ENCODE measurements at regions of chr12 and their contacts with region 1.

Region 1: DNA sequence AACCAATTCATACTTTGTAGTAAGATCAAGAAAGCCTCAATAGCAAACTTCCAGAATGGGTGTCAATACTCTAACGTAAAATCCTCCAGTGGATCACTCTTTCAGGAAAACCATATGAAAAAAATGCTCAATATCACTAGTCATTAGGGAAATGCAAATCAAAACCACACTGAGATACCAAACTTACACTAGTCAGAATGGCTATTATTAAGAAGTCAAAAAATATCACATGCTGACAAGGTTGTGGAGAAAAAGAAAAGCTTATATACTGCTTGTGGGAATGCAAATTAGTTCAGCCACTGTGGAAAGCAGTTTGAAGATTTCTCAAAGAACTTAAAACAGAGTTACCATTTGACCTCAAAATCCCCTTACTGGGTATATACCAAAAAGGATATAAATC is 49.5 kb upstream of the ATXN7L3B start:
- DNase-seq: no peak
- H3K4me3 Mint-ChIP-seq: no peak overlapping the region
- H3K27ac Mint-ChIP-seq: no peak overlapping the region
- H3K4me1 Mint-ChIP-seq: peaks cover 15% of the 10 kb centered on the region
- H3K27me3 Mint-ChIP-seq: peaks cover 1% of the 10 kb centered on the region

Region 2: DNA sequence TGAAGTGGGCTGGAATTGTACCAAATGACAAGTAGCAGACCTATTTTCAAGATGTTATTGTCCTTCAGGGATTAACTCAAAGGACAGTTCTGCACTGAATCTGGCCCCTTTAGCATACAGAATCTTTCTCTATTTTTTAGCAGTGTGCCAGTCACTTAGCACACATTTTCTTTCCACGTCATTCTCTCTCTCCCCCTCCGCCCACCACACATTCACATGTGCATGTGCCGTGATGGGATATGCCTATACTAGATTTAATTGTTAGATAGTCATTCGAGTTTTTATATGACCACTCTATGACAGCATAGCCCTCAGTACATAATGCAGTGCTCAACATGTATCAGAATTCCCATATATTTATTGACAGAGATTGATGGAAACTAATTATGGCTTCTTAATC is 592.4 kb after region 1 on chr12:
- CTCF ChIA-PET with region 1: no interaction called
- POLR2A ChIA-PET with region 1: no interaction called
- intact Hi-C with region 1: loop called (anchors 5 kb)
- DNase-seq: no peak
- H3K4me3 Mint-ChIP-seq: no peak overlapping the region
- H3K27ac Mint-ChIP-seq: no peak overlapping the region
- H3K4me1 Mint-ChIP-seq: no peaks in the 10 kb centered on the region
- H3K27me3 Mint-ChIP-seq: no peaks in the 10 kb centered on the region